Activated naive CD4-positive, alpha-beta T cell treated with anti-CD3 and anti-CD28 coated beads for 36 hours (primary cell): ENCODE measurements at regions of chr1 and their contacts with region 1.

Region 1: GRCh38 chr1:54227091-54227602 is 27.2 kb downstream of the MRPL37 start:
- DNase-seq: peak; percentile 17
- H3K4me3 Mint-ChIP-seq: no peak overlapping the region
- H3K27ac Mint-ChIP-seq: peak overlapping the region; percentile 46
- H3K4me1 Mint-ChIP-seq: peaks cover 26% of the 10 kb centered on the region
- H3K27me3 Mint-ChIP-seq: no peaks in the 10 kb centered on the region

Region 2: DNA sequence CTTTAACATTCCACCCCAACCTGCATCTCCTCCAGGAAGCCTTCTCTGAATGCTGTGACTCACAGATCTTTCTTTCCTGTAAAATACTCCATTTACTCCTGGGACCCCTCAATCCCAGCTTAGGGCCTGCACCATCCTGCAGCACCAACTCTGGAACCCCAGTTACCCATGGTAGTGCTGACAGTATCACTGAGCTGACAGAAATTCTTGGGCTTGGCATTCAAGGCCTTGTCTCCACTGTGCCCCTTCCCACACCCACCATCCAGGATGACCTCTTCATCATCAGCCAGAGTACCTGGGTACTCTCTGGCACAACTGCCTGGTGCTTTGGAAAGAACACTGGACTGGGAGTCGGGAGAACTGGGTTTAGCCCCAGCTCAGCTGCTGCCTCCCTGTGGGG is 35.6 kb before region 1 on chr1:
- CTCF ChIA-PET with region 1: no interaction called
- intact Hi-C with region 1: loop called (anchors 1 kb)
- DNase-seq: no peak
- H3K4me3 Mint-ChIP-seq: no peak overlapping the region
- H3K27ac Mint-ChIP-seq: no peak overlapping the region
- H3K4me1 Mint-ChIP-seq: no peaks in the 10 kb centered on the region
- H3K27me3 Mint-ChIP-seq: no peaks in the 10 kb centered on the region

Region 3: GRCh38 chr1:54249819-54250435 is 22.8 kb after region 1 on chr1:
- CTCF ChIA-PET with region 1: no interaction called
- intact Hi-C with region 1: no loop called
- DNase-seq: no peak
- H3K4me3 Mint-ChIP-seq: no peak overlapping the region
- H3K27ac Mint-ChIP-seq: no peak overlapping the region
- H3K4me1 Mint-ChIP-seq: no peaks in the 10 kb centered on the region
- H3K27me3 Mint-ChIP-seq: no peaks in the 10 kb centered on the region

Region 4: GRCh38 chr1:54277451-54278341 is 50.5 kb after region 1 on chr1:
- CTCF ChIA-PET with region 1: no interaction called
- intact Hi-C with region 1: loop called (anchors 2 kb)
- DNase-seq: no peak
- H3K4me3 Mint-ChIP-seq: peak overlapping the region; percentile 44
- H3K27ac Mint-ChIP-seq: peak overlapping the region; percentile 93
- H3K4me1 Mint-ChIP-seq: peaks cover 62% of the 10 kb centered on the region
- H3K27me3 Mint-ChIP-seq: no peaks in the 10 kb centered on the region